Upper lobe of right lung (tissue), 1 donor: ENCODE measurements at regions of chr11 and their contacts with region 1.

Region 1: GRCh38 chr11:44538375-44539054 is 26.9 kb upstream of the CD82 start:
- DNase-seq: peak; percentile 84
- ATAC-seq: peak; percentile 98
- H3K4me3 ChIP-seq: no peak overlapping the region
- H3K27ac ChIP-seq: no peak overlapping the region
- H3K4me1 ChIP-seq: no peaks in the 10 kb centered on the region
- H3K27me3 ChIP-seq: no peaks in the 10 kb centered on the region
- CTCF ChIP-seq: peak; percentile 98

Region 2: DNA sequence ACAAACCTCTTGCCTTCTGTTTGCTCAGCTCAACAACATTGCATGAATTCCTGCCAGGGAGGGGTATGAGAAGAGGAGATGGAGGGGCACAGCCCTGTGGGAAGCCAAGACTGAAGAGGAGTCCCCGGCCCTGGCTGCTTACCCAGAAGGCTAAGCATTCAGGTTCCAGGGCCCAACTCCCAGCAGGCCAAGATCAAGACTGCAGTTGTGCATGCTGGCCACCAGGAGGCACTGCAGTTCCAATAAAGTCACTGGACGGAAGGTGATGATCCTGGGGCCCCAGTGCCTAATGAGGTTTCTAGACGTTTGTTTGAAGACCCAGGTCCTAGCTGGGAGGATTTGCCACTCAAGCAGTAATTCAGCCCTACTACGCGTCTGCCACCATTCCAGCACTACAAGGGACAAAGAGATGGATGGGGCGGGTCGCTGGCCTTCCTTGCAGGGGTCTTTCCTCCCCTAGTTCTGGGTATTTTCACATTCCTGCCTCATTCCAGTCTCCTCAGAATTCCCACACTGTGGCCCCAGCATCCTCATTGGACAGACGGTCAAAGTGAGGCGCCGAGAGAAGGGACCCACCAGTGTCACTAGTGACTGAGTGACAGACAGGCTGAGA is 252.1 kb before region 1 on chr11:
- intact Hi-C with region 1: loop called (anchors 5 kb)
- DNase-seq: no peak
- ATAC-seq: peak; percentile 87
- H3K4me3 ChIP-seq: no peak overlapping the region
- H3K27ac ChIP-seq: no peak overlapping the region
- H3K4me1 ChIP-seq: no peaks in the 10 kb centered on the region
- H3K27me3 ChIP-seq: no peaks in the 10 kb centered on the region
- CTCF ChIP-seq: peak; percentile 97